ENCODE measurements at regions of chr7 and their contacts with region 1.

Region 1: DNA sequence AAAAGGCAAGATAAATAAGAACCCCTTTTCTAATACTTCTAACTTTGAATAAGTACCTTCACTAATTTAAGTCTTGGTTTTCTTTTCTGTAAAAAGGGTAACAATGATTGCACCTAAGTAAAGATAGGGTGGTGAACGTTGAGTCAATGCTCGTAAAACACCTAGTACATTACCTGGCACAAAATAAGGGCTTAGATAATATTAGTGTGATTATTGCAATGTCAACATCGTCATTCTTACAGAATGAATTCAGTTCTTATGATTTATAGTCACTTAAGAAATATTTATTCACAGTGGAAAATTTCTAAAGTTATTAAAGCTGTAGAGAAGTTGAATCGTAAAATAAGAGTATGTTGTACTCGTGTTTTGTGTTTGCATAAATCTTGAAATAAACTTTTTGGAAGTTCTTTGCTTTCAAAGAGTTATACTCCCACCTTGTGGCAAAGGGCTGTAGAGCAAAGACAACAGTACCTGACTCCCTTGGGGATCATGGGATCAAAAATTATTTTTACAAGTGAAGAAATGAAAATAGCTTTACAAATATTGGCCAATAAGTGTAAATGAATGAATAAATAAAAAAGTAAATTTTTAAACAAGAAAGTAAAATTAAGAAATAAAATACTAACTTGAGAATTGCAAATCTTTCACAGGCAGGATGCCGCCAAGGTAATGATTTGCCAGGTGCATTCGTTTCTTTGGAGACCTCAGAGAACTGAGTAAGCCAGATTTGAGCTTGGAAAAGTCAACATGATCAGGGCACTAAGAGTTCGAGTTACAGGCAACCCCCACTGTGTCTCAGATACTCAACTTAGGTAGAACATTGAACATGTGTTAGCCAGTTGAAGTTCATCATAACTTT is 285.8 kb upstream of the CACNA2D1 start:
- DNase-seq: peak in 3 of 9 experiments; percentile 9 to 33 (median 32)
- ATAC-seq: no peak
- H3K4me3 ChIP-seq: no peak overlapping the region
- H3K4me3 Mint-ChIP-seq: no peak overlapping the region
- H3K27ac ChIP-seq: no peak overlapping the region
- H3K27ac Mint-ChIP-seq: no peak overlapping the region
- H3K4me1 ChIP-seq: no peaks in the 10 kb centered on the region
- H3K4me1 Mint-ChIP-seq: no peaks in the 10 kb centered on the region
- H3K27me3 ChIP-seq: no peaks in the 10 kb centered on the region
- H3K27me3 Mint-ChIP-seq: no peaks in the 10 kb centered on the region
- CTCF ChIP-seq: peak; percentile 66

Region 2: GRCh38 chr7:81482600-81483186 is 1246.7 kb before region 1 on chr7:
- CTCF ChIA-PET with region 1: interaction called, 5 read pairs
- POLR2A ChIA-PET with region 1: no interaction called
- intact Hi-C with region 1: loop called (anchors 1 to 2 kb)
- DNase-seq: peak in 2 of 9 experiments; percentile 3 to 20
- ATAC-seq: no peak
- H3K4me3 ChIP-seq: no peak overlapping the region
- H3K4me3 Mint-ChIP-seq: no peak overlapping the region
- H3K27ac ChIP-seq: no peak overlapping the region
- H3K27ac Mint-ChIP-seq: no peak overlapping the region
- H3K4me1 ChIP-seq: no peaks in the 10 kb centered on the region
- H3K4me1 Mint-ChIP-seq: no peaks in the 10 kb centered on the region
- H3K27me3 ChIP-seq: no peaks in the 10 kb centered on the region
- H3K27me3 Mint-ChIP-seq: no peaks in the 10 kb centered on the region
- CTCF ChIP-seq: peak; percentile 68

Region 3: DNA sequence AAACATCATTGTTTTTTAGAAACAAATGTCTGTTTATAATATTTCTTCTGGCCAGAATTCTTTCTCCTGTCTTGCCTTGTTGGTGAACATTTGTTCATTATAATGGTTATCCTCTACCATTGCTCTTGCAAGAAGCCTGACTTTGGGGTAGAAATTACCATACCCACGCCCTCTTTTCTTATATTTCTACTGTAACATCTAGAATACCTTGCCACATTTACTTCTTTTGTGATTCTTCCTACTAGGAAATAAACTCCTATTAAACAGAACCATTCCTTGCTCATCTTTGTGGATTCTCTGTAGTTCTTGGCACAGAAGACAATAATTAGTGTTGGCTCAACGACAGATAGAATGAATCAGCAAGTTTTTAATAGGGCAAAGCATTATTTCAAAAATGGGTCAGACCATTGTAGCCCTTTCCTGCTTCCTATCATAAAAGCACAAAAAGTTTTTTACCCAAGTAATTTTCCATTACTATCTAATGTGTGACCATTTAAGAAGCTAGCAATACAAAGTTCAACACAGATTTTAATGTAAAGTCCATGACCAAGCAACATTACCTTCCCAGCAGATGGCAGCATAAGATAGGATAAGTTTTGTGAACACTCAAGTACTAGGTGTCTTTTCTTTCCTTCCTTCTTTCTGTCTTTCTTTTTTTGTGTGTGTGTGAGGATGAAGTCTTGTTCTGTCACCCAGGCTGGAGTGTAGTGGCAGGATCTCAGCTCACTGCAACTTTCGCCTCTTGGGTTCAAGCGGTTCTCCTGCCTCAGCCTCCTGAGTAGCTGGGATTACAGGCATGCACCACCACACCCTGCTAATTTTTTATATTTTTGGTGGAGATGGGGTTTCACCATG is 1229.9 kb before region 1 on chr7:
- CTCF ChIA-PET with region 1: no interaction called
- POLR2A ChIA-PET with region 1: no interaction called
- intact Hi-C with region 1: loop called in 1 of 2 experiments (anchors 5 kb)
- DNase-seq: peak in 1 of 9 experiments; percentile 26
- ATAC-seq: no peak
- H3K4me3 ChIP-seq: no peak overlapping the region
- H3K4me3 Mint-ChIP-seq: no peak overlapping the region
- H3K27ac ChIP-seq: no peak overlapping the region
- H3K27ac Mint-ChIP-seq: no peak overlapping the region
- H3K4me1 ChIP-seq: no peaks in the 10 kb centered on the region
- H3K4me1 Mint-ChIP-seq: no peaks in the 10 kb centered on the region
- H3K27me3 ChIP-seq: no peaks in the 10 kb centered on the region
- H3K27me3 Mint-ChIP-seq: no peaks in the 10 kb centered on the region
- CTCF ChIP-seq: no peak

Region 4: DNA sequence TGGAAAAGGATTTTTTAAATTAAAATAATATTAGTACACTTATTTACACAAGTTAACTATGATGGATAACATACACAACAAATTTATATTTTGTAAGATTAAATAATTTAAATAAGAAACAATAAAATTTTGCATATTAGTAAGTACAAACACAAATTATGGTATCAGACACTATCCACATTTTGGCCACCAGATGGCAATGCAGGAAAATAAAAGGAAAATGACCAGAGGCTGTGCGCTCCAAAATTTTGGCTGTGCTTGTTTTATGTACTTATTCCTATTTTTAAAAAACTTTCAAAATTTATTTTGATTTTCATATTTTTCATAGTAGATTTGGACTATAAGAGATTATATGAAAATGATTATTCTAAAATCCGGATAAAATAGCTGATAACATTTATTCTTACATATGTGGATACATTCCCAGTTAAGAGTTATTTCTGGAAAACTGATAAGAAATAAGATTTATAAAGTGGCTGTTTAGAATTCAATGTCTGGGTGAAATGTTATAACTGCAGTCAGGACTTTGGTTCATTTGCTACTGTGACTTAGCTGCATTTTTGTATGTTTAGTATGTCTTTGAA is 684.8 kb before region 1 on chr7:
- CTCF ChIA-PET with region 1: no interaction called
- POLR2A ChIA-PET with region 1: no interaction called
- intact Hi-C with region 1: loop called in 1 of 2 experiments (anchors 2 kb)
- DNase-seq: peak in 2 of 9 experiments; percentile 14 to 18
- ATAC-seq: no peak
- H3K4me3 ChIP-seq: no peak overlapping the region
- H3K4me3 Mint-ChIP-seq: no peak overlapping the region
- H3K27ac ChIP-seq: no peak overlapping the region
- H3K27ac Mint-ChIP-seq: no peak overlapping the region
- H3K4me1 ChIP-seq: no peaks in the 10 kb centered on the region
- H3K4me1 Mint-ChIP-seq: no peaks in the 10 kb centered on the region
- H3K27me3 ChIP-seq: no peaks in the 10 kb centered on the region
- H3K27me3 Mint-ChIP-seq: no peaks in the 10 kb centered on the region
- CTCF ChIP-seq: peak; percentile 31

Region 5: DNA sequence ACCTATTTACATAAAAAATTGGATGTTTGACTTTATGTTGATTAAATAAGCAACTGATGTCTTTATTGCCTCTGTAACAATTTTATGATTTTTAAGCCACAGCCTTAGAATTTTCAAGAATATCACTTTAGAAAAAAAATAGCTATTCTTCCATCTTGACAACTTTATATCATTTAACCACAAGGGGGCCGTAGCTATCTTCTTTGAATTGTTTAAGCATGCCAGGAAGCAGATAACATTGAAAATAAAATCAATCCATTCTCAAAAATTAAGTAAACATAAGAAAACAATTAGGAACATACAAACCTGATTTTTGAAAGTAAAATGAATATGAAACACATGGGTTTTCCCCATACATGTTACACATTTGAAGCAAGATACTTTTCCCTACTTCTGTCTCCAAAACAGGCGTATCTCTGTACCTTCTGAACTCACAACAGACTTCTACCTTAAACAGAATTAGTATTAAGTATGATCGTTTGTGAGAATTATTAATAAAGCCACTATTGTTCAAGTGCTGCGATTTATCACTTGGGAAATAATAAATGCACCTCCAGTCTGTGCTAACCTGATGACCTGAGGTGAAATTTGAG is 494.8 kb before region 1 on chr7:
- CTCF ChIA-PET with region 1: no interaction called
- POLR2A ChIA-PET with region 1: no interaction called
- intact Hi-C with region 1: loop called in 1 of 2 experiments (anchors 2 kb)
- DNase-seq: peak in 1 of 9 experiments; percentile 2
- ATAC-seq: no peak
- H3K4me3 ChIP-seq: no peak overlapping the region
- H3K4me3 Mint-ChIP-seq: no peak overlapping the region
- H3K27ac ChIP-seq: no peak overlapping the region
- H3K27ac Mint-ChIP-seq: no peak overlapping the region
- H3K4me1 ChIP-seq: no peaks in the 10 kb centered on the region
- H3K4me1 Mint-ChIP-seq: no peaks in the 10 kb centered on the region
- H3K27me3 ChIP-seq: no peaks in the 10 kb centered on the region
- H3K27me3 Mint-ChIP-seq: no peaks in the 10 kb centered on the region
- CTCF ChIP-seq: no peak

Region 6: DNA sequence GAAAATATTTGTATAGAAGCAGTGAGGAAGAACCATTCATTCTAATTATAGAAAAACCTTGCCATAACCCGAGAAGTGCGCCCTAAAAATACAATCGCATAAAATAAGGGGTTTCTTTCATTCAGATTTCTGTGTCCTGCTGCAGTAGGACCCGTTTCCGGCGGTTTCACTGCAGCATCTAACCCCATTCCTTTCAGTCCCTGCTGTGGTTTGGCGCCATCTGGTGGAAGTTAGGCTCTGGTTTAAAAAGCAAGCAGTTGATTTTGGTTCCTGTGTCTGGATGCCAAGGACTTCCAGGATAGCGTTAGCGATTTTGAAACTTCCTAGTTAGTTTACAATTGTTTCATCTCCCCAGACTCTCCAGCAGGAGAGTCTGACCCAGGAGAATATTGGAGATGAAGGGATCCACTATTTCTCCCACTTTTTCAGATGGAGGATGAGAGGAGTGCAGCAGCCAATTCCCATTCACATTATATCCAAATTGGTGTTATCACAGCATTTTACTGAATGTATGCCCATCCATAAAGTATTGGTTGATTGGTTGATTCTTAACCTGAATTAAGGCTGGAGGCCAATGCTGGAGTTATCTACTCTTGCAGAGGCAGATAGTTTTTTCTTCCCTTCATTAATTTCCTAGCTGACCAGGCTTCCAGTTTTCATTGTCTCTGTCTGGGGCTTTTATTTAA is 157.1 kb before region 1 on chr7:
- CTCF ChIA-PET with region 1: interaction called, 3 read pairs
- POLR2A ChIA-PET with region 1: no interaction called
- intact Hi-C with region 1: loop called in 1 of 2 experiments (anchors 1 kb)
- DNase-seq: peak; percentile 19 to 81 (median 62)
- ATAC-seq: peak; percentile 48
- H3K4me3 ChIP-seq: no peak overlapping the region
- H3K4me3 Mint-ChIP-seq: no peak overlapping the region
- H3K27ac ChIP-seq: no peak overlapping the region
- H3K27ac Mint-ChIP-seq: no peak overlapping the region
- H3K4me1 ChIP-seq: no peaks in the 10 kb centered on the region
- H3K4me1 Mint-ChIP-seq: no peaks in the 10 kb centered on the region
- H3K27me3 ChIP-seq: no peaks in the 10 kb centered on the region
- H3K27me3 Mint-ChIP-seq: no peaks in the 10 kb centered on the region
- CTCF ChIP-seq: peak; percentile 87

Region 7: GRCh38 chr7:82605247-82605872 is 124.0 kb before region 1 on chr7:
- CTCF ChIA-PET with region 1: no interaction called
- POLR2A ChIA-PET with region 1: no interaction called
- intact Hi-C with region 1: loop called (anchors 1 to 2 kb)
- DNase-seq: peak in 3 of 9 experiments; percentile 6 to 36 (median 18)
- ATAC-seq: no peak
- H3K4me3 ChIP-seq: no peak overlapping the region
- H3K4me3 Mint-ChIP-seq: no peak overlapping the region
- H3K27ac ChIP-seq: no peak overlapping the region
- H3K27ac Mint-ChIP-seq: no peak overlapping the region
- H3K4me1 ChIP-seq: no peaks in the 10 kb centered on the region
- H3K4me1 Mint-ChIP-seq: no peaks in the 10 kb centered on the region
- H3K27me3 ChIP-seq: no peaks in the 10 kb centered on the region
- H3K27me3 Mint-ChIP-seq: no peaks in the 10 kb centered on the region
- CTCF ChIP-seq: peak; percentile 48

Region 8: GRCh38 chr7:82700741-82701140 is 28.7 kb before region 1 on chr7:
- CTCF ChIA-PET with region 1: no interaction called
- POLR2A ChIA-PET with region 1: no interaction called
- intact Hi-C with region 1: no loop called
- DNase-seq: no peak
- ATAC-seq: no peak
- H3K4me3 ChIP-seq: no peak overlapping the region
- H3K4me3 Mint-ChIP-seq: no peak overlapping the region
- H3K27ac ChIP-seq: no peak overlapping the region
- H3K27ac Mint-ChIP-seq: no peak overlapping the region
- H3K4me1 ChIP-seq: no peaks in the 10 kb centered on the region
- H3K4me1 Mint-ChIP-seq: no peaks in the 10 kb centered on the region
- H3K27me3 ChIP-seq: no peaks in the 10 kb centered on the region
- H3K27me3 Mint-ChIP-seq: no peaks in the 10 kb centered on the region
- CTCF ChIP-seq: no peak